B cell (primary cell): ENCODE measurements at regions of chr2 and their contacts with region 1.

Region 1: DNA sequence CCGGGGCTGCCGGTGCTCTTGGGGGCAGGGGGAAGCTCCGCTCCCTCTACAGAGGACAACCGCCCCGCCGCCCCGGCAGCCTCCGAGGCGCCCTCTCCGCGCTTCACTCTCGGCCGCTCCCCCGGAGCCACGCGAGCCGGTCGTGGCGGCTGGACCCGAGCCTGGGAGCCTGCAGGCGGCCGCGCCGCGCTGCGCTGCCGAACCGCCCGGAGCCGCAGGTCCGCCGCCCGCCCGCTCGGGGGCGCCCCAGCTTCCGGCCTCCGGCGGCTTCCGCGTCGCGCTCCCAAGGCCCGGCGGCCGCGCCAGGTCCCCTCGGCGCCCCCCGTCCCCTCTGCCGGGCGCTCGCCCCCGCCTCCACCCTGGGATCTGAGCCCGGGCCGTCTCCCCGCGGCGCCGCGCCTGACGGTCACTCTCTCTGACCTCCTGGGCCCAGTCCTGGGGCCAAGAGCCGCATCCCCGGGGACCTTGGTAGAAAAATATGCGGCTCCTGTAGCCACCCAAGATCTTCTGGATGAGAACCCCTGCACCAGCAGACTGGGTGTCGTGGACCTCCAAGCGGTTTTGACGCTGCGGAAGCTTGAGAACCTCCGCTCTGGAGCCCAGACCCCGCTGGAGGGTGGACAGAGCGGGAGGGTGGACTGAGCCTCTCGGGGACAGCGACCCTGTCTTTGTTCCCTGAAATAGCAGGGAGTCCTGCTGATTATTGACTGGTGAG is 44.3 kb downstream of the SERTAD2 start:
- DNase-seq: peak; percentile 86
- ATAC-seq: peak; percentile 72
- H3K4me3 ChIP-seq: peak overlapping the region; percentile 51 to 77 (median 64)
- H3K4me3 Mint-ChIP-seq: peak overlapping the region; percentile 78
- H3K27ac ChIP-seq: peak overlapping the region; percentile 53 to 84
- H3K27ac Mint-ChIP-seq: peak overlapping the region; percentile 78
- H3K4me1 ChIP-seq: peaks cover 22 to 34% of the 10 kb centered on the region in 2 donors
- H3K4me1 Mint-ChIP-seq: peaks cover 29% of the 10 kb centered on the region
- H3K27me3 ChIP-seq: no peaks in the 10 kb centered on the region
- H3K27me3 Mint-ChIP-seq: no peaks in the 10 kb centered on the region
- CTCF ChIP-seq: peak; percentile 53

Region 2: DNA sequence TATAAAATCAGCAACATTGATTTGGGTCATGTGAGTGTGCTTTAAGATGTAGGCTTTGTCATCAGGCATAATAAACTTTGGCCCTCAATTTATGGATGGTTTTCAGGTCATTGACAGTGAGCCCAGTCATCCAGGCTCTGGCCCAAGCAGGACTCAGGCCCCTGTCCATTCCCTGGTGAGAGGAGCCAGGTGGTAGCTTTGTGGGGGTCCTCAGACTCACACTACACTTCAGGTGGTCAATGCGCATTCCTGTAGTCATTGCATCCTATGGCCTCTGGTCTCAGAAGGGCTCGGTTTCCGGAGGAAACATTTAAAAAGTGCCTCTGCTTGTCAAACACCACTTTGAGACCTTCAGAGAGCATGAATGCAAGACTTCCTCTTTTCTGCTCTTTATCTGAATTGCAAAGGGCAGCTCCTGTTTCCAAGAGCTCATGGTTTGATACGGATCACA is 135.2 kb before region 1 on chr2:
- CTCF ChIA-PET with region 1: no interaction called
- POLR2A ChIA-PET with region 1: no interaction called
- intact Hi-C with region 1: no loop called
- DNase-seq: peak; percentile 54
- ATAC-seq: peak; percentile 66
- H3K4me3 ChIP-seq: no peak overlapping the region
- H3K4me3 Mint-ChIP-seq: no peak overlapping the region
- H3K27ac ChIP-seq: no peak overlapping the region
- H3K27ac Mint-ChIP-seq: peak overlapping the region; percentile 44
- H3K4me1 ChIP-seq: peaks cover 12 to 13% of the 10 kb centered on the region in 2 donors
- H3K4me1 Mint-ChIP-seq: peaks cover 13% of the 10 kb centered on the region
- H3K27me3 ChIP-seq: no peaks in the 10 kb centered on the region
- H3K27me3 Mint-ChIP-seq: no peaks in the 10 kb centered on the region
- CTCF ChIP-seq: no peak

Region 3: GRCh38 chr2:64586883-64587481 is 22.4 kb before region 1 on chr2:
- CTCF ChIA-PET with region 1: interaction called, 35 read pairs
- POLR2A ChIA-PET with region 1: no interaction called
- intact Hi-C with region 1: no loop called
- DNase-seq: peak; percentile 72
- ATAC-seq: peak; percentile 58
- H3K4me3 ChIP-seq: no peak overlapping the region
- H3K4me3 Mint-ChIP-seq: no peak overlapping the region
- H3K27ac ChIP-seq: no peak overlapping the region
- H3K27ac Mint-ChIP-seq: peak overlapping the region; percentile 32
- H3K4me1 ChIP-seq: peaks cover 0 to 4% of the 10 kb centered on the region in 2 donors
- H3K4me1 Mint-ChIP-seq: peaks cover 14% of the 10 kb centered on the region
- H3K27me3 ChIP-seq: no peaks in the 10 kb centered on the region
- H3K27me3 Mint-ChIP-seq: no peaks in the 10 kb centered on the region
- CTCF ChIP-seq: peak; percentile 88

Region 4: DNA sequence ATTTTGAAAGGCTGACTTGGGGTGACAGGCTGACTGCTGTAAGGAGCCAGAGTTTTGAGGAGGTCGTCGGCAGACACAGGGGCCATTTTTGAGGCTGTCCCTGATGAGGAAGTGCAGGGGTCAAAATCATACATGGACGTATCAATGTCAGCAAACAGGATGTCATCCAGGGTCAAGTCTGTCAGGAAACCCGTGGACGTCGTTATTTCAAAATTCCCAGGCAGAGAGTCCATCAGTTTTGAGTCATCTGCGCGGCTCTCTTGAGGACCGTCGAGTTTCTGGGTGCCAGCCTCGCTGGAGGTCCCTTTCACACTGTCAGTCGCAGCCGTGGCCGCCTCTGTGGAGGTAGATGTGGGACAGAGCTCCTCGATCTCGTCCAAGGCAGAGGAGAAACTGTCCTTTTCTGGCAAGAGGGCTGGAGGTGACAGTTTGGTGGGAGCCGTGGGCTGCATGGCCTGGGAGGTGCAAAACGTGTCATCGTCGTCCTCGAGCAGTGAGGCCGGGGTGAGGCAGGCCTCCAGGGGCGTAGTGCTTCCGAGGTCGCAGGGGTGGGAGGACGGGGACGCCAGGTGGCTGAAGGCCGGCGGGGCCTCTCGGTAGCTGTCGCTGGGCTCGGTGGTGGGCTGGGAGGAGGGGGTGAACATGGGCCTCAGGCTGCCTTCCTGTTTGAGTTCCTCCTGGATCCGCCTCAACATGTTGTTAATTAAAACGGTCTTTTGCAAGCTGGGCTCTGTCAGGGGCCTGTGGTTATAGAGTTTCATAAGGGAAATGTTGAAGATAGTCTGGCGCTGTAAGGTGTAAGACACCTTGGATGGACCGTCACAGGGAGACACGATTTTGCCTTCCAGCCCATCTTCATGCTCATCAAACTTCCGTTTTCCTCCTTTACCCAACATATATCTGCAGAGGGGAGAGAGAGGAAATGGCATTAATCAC is 26.9 kb after region 1 on chr2:
- CTCF ChIA-PET with region 1: interaction called, 5 read pairs
- POLR2A ChIA-PET with region 1: interaction called, 9 read pairs
- intact Hi-C with region 1: loop called (anchors 2 kb)
- DNase-seq: peak; percentile 75
- ATAC-seq: peak; percentile 50
- H3K4me3 ChIP-seq: peak overlapping the region in 3 of 5 experiments; percentile 13 to 43 (median 28)
- H3K4me3 Mint-ChIP-seq: peak overlapping the region; percentile 84
- H3K27ac ChIP-seq: peak overlapping the region; percentile 80 to 93
- H3K27ac Mint-ChIP-seq: peak overlapping the region; percentile 97
- H3K4me1 ChIP-seq: peaks cover 67 to 69% of the 10 kb centered on the region in 2 donors
- H3K4me1 Mint-ChIP-seq: peaks cover 70% of the 10 kb centered on the region
- H3K27me3 ChIP-seq: no peaks in the 10 kb centered on the region
- H3K27me3 Mint-ChIP-seq: no peaks in the 10 kb centered on the region
- CTCF ChIP-seq: no peak

Region 5: DNA sequence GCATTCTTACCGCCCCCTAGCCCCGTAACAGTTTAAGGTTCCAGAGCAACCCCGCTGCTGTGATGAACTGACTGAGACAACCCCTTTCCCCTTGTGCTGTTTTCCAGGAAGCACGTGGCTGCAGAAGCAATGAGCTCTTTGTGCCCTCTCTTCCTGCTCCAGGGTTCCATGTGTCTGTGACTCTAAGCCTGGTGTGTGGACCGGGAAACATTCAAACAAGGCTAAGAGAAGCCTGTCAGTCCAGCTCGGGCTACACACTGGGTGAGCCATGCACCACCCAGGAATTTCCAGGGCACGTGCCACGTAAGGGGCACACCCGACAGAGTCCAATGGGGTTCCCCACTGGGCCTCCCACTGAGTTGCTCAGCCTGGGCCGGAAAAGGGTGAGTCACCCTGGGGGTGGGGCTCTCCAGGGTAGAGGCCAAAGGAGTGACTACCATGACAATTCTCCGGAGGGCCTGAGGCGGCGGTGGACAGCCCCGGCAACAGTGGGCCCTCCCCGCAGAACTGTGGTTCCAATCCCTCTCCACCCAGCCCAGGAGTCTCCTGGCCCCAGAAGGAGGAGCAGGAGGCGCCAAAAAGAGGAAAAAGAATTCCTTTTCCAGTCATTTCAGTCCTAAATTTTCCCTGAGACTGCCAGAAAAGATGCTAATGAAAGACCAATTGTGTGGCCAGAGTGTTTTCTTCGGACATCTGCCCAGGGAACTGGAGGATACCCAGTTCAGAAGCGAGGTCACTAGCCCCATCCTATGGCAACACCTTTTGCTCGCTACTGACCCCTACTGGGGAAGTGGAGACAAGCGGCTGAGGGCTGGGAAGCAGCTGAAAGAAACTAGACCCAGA is 222.0 kb after region 1 on chr2:
- CTCF ChIA-PET with region 1: interaction called, 3 read pairs
- POLR2A ChIA-PET with region 1: no interaction called
- intact Hi-C with region 1: loop called (anchors 1 kb)
- DNase-seq: peak; percentile 82
- ATAC-seq: peak; percentile 91
- H3K4me3 ChIP-seq: peak overlapping the region in 3 of 5 experiments; percentile 11 to 38 (median 16)
- H3K4me3 Mint-ChIP-seq: peak overlapping the region; percentile 63
- H3K27ac ChIP-seq: no peak overlapping the region
- H3K27ac Mint-ChIP-seq: peak overlapping the region; percentile 77
- H3K4me1 ChIP-seq: peaks cover 8 to 12% of the 10 kb centered on the region in 2 donors
- H3K4me1 Mint-ChIP-seq: peaks cover 13% of the 10 kb centered on the region
- H3K27me3 ChIP-seq: no peaks in the 10 kb centered on the region
- H3K27me3 Mint-ChIP-seq: no peaks in the 10 kb centered on the region
- CTCF ChIP-seq: peak; percentile 96

Region 6: GRCh38 chr2:64859312-64860212 is 250.2 kb after region 1 on chr2:
- CTCF ChIA-PET with region 1: interaction called, 11 read pairs
- POLR2A ChIA-PET with region 1: interaction called, 10 read pairs
- intact Hi-C with region 1: loop called (anchors 2 kb)
- DNase-seq: peak; percentile 69
- ATAC-seq: peak; percentile 11
- H3K4me3 ChIP-seq: peak overlapping the region; percentile 61 to 79 (median 67)
- H3K4me3 Mint-ChIP-seq: peak overlapping the region; percentile 79
- H3K27ac ChIP-seq: peak overlapping the region; percentile 91 to 93
- H3K27ac Mint-ChIP-seq: no peak overlapping the region
- H3K4me1 ChIP-seq: peaks cover 76 to 80% of the 10 kb centered on the region in 2 donors
- H3K4me1 Mint-ChIP-seq: peaks cover 28% of the 10 kb centered on the region
- H3K27me3 ChIP-seq: no peaks in the 10 kb centered on the region
- H3K27me3 Mint-ChIP-seq: no peaks in the 10 kb centered on the region
- CTCF ChIP-seq: no peak

Region 7: GRCh38 chr2:64865073-64865830 is 255.9 kb after region 1 on chr2:
- CTCF ChIA-PET with region 1: interaction called, 16 read pairs
- POLR2A ChIA-PET with region 1: interaction called, 10 read pairs
- intact Hi-C with region 1: loop called (anchors 2 kb)
- DNase-seq: peak; percentile 86
- ATAC-seq: peak; percentile 54
- H3K4me3 ChIP-seq: peak overlapping the region; percentile 46 to 88 (median 64)
- H3K4me3 Mint-ChIP-seq: no peak overlapping the region
- H3K27ac ChIP-seq: peak overlapping the region; percentile 91 to 93
- H3K27ac Mint-ChIP-seq: peak overlapping the region; percentile 53
- H3K4me1 ChIP-seq: peaks cover 49 to 60% of the 10 kb centered on the region in 2 donors
- H3K4me1 Mint-ChIP-seq: peaks cover 1% of the 10 kb centered on the region
- H3K27me3 ChIP-seq: no peaks in the 10 kb centered on the region
- H3K27me3 Mint-ChIP-seq: no peaks in the 10 kb centered on the region
- CTCF ChIP-seq: peak; percentile 85

Region 8: DNA sequence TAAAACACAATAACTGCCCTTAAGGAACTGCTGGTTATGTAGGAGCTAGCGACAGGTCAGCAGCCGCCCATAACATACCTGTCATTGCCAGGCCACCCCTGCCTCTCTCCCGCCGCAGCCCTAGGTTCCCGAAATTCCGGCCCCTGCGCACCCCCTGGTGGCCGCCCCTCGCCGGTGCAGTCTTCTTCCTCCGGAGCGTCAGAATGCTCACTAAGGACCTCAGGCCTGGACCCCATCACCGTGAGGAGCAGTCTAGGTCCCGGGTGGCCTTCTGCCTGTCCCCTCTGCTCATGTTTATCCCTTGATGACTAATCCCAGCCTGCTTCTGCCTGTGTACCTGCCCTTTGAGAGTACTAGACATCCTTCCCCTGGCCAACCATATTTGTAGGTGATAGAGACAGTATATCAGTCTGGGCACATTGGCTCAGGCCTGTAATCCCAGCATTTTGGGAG is 264.1 kb after region 1 on chr2:
- CTCF ChIA-PET with region 1: interaction called, 16 read pairs
- POLR2A ChIA-PET with region 1: no interaction called
- intact Hi-C with region 1: no loop called
- DNase-seq: peak; percentile 87
- ATAC-seq: peak; percentile 99
- H3K4me3 ChIP-seq: peak overlapping the region in 3 of 5 experiments; percentile 11 to 35 (median 29)
- H3K4me3 Mint-ChIP-seq: peak overlapping the region; percentile 67
- H3K27ac ChIP-seq: no peak overlapping the region
- H3K27ac Mint-ChIP-seq: no peak overlapping the region
- H3K4me1 ChIP-seq: peaks cover 7 to 9% of the 10 kb centered on the region in 2 donors
- H3K4me1 Mint-ChIP-seq: peaks cover 7% of the 10 kb centered on the region
- H3K27me3 ChIP-seq: no peaks in the 10 kb centered on the region
- H3K27me3 Mint-ChIP-seq: no peaks in the 10 kb centered on the region
- CTCF ChIP-seq: peak; percentile 93